ENCODE measurements at regions of chr3 and their contacts with region 1.

Region 1: DNA sequence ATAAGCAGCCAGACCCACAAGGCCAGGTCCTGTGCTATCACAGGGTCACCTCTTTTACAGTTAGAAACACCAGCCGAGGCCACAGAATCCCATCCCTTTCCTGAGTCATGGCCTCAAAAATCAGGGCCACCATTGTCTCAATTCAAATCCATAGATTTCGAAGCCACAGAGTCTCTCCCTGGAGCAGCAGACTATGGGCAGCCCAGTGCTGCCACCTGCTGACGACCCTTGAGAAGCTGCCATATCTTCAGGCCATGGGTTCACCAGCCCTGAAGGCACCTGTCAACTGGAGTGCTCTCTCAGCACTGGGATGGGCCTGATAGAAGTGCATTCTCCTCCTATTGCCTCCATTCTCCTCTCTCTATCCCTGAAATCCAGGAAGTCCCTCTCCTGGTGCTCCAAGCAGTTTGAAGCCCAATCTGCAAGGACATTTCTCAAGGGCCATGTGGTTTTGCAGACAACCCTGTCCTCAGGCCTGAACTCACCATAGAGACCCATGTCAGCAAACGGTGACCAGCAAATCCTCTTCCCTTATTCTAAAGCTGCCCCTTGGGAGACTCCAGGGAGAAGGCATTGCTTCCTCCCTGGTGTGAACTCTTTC is 39.6 kb downstream of the TGM4 start:
- DNase-seq: peak; percentile 80
- ATAC-seq: peak; percentile 73
- H3K4me3 Mint-ChIP-seq: no peak overlapping the region
- H3K27ac Mint-ChIP-seq: no peak overlapping the region
- H3K4me1 Mint-ChIP-seq: no peaks in the 10 kb centered on the region
- H3K27me3 Mint-ChIP-seq: peaks cover 7% of the 10 kb centered on the region

Region 2: GRCh38 chr3:44323341-44323955 is 590.5 kb before region 1 on chr3:
- CTCF ChIA-PET with region 1: no interaction called
- POLR2A ChIA-PET with region 1: no interaction called
- intact Hi-C with region 1: loop called in 1 of 2 experiments (anchors 1 kb)
- DNase-seq: peak; percentile 75
- ATAC-seq: no peak
- H3K4me3 Mint-ChIP-seq: no peak overlapping the region
- H3K27ac Mint-ChIP-seq: no peak overlapping the region
- H3K4me1 Mint-ChIP-seq: no peaks in the 10 kb centered on the region
- H3K27me3 Mint-ChIP-seq: peaks cover 2% of the 10 kb centered on the region

Measured in activated CD4-positive, alpha-beta T cell treated with anti-CD3 and anti-CD28 coated beads for 36 hours (primary cell).